Endothelial cell of umbilical vein (primary cell): ENCODE measurements at regions of chr1 and their contacts with region 1.

Region 1: DNA sequence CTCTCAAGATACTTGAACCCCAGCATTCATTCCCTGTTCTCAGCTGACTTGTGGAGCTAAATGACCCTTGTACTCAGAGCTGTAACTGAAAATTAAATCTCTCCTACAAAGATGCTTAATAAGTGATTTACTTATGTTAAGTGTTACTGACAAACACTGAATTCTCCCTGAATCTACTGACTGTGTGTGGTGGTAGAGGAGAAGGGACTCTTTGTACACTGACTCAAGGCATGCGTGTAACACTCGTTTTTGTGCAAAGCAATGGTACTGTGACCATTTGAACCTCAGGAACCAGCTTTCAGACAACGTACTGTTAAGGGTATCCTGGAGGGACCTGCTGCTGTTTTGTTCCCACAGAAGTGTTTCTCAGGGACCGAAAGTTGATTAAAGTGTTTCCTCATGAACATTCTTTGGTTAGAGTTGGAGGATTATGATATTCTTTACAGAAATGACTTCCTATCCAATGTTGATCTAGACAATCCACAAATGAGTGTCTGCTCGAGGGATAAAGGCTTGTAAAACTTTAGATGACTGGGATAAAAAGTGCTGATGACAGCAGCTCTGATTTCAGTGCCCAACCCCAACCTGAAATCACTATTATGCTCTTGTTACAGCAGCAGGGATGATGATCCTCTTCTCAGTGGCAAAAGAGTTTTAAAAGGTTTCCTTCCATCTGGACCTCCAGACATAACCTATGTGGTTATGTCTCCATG is 12.8 kb downstream of the RGL1 start:
- DNase-seq: peak; percentile 63
- H3K4me3 ChIP-seq: no peak overlapping the region
- H3K27ac ChIP-seq: no peak overlapping the region
- H3K4me1 ChIP-seq: peaks cover 38% of the 10 kb centered on the region
- H3K27me3 ChIP-seq: no peaks in the 10 kb centered on the region
- CTCF ChIP-seq: no peak
- POLR2A ChIP-seq: no peak

Region 2: DNA sequence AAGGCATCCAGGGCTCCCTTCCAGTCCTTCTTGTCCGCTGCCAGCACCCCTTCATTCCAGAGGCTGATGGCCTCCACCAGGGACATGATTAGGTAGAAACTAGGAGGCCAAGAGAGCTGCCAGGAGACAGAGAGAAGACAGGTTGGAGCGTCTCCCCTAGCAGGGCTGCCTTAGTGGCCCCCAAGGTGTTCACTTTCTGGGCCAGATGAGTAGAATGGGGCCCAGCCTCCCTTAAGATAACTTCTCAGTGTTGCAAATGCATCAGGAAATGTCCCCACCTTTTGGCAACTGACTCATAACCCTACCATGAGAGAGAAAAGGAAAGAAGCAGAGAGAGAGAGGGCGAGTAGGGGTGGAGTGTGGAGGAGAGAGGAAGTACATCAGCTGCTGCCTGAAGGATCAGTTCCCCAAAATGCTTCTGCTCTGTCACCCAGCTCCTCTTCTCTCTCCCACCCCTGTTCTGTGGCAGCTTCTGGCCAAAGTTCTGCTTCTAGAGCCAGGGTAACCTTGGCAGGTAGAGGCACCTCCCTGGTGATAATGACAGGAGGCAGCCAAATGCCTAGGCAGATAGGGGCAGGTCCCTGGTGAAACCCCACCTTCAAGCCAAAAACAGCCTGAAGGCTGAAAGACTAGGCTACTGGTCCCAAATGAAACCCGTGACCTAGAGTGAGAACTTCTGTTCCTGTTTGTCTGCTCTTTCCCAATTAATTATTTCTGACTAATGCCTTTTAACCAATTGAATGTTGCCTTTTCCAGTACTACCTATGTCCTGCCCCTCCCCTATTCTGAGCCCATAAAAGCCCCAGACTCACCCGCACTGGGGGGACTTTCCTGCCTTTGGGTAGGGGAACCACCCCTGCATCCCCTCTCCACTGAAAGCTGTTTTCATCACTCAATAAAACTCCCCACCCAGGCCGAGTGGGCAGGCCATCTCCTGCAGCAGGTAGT is 227.2 kb before region 1 on chr1 and contains the start of gene NCF2:
- CTCF ChIA-PET with region 1: no interaction called
- POLR2A ChIA-PET with region 1: no interaction called
- dilution Hi-C with region 1: no loop called
- intact Hi-C with region 1: no loop called
- DNase-seq: no peak
- H3K4me3 ChIP-seq: no peak within 1 kb of the TSS
- H3K27ac ChIP-seq: no peak within 1 kb of the TSS
- H3K4me1 ChIP-seq: no peaks in the 10 kb centered on the region
- H3K27me3 ChIP-seq: peaks cover 5 to 7% of the 10 kb centered on the region in 2 experiments
- CTCF ChIP-seq: no peak
- POLR2A ChIP-seq: no peak
- total RNA-seq, gene NCF2: not detected in 2 replicates

Region 3: GRCh38 chr1:183783767-183784637 is 33.7 kb before region 1 on chr1:
- CTCF ChIA-PET with region 1: no interaction called
- POLR2A ChIA-PET with region 1: no interaction called
- dilution Hi-C with region 1: no loop called
- intact Hi-C with region 1: no loop called
- DNase-seq: peak; percentile 90
- H3K4me3 ChIP-seq: no peak overlapping the region
- H3K27ac ChIP-seq: peak overlapping the region; percentile 8
- H3K4me1 ChIP-seq: peaks cover 21% of the 10 kb centered on the region
- H3K27me3 ChIP-seq: no peaks in the 10 kb centered on the region
- CTCF ChIP-seq: no peak
- POLR2A ChIP-seq: no peak

Region 4: DNA sequence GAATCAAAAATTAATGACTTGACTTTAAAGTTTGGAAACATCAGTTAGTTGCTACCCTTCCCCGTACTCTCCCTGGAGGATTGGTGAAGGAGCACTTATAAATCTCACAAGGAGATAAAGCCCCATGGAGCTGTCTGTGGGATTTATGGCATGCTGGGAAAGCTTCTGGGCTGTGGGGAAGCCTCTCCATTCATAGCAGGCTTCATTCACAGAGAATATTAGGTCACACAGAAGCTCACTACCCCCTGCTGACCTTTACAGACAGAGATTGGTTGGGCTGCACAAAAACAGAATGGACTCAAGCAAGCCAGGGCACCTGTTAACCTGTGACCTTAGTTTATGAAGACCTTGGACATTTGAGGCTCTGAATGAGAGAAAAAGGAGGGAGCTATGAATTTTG is 19.3 kb after region 1 on chr1:
- CTCF ChIA-PET with region 1: interaction called, 8 read pairs
- POLR2A ChIA-PET with region 1: no interaction called
- dilution Hi-C with region 1: no loop called
- intact Hi-C with region 1: loop called (anchors 1 kb)
- DNase-seq: no peak
- H3K4me3 ChIP-seq: no peak overlapping the region
- H3K27ac ChIP-seq: no peak overlapping the region
- H3K4me1 ChIP-seq: peaks cover 35% of the 10 kb centered on the region
- H3K27me3 ChIP-seq: no peaks in the 10 kb centered on the region
- CTCF ChIP-seq: no peak
- POLR2A ChIP-seq: no peak

Region 5: DNA sequence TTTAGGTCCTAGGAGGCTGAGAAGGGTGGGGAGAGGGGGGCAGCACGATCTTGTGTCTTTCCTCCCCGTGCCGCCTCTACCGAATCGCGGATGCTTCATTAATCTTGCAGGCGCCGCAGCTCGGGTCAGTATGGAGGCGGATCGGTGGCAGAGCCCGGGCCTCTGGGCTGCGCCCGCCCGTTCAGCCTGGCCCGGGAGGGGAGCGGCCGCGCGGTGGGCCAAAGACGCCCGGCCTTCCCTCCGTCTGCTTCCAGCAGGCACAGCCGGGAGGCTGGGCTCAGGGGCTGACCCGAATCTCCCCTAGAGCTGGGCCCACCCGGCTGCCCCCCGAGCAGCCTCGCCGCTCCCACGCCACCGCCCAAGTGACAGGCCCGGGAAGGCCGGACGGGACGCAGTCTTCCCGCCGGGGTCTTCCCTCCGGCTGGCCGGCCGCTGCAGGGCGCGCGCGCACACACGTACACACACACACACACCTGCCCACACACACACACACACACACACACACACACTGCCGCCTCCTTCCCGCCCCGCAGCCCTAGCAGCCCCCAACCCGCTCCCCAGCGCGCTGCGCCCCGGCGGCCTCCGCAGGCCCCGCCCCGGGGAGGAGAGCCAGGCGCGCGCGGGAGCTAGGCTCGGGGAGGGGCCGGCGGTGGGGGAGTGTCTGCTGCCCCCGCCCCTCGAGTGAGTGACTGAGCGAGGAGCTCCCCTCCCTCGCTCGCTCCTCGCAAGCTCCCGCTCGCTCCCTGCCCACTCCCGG is 568.8 kb after region 1 on chr1 and contains the start of gene C1orf21:
- CTCF ChIA-PET with region 1: no interaction called
- POLR2A ChIA-PET with region 1: no interaction called
- dilution Hi-C with region 1: no loop called
- intact Hi-C with region 1: no loop called
- DNase-seq: peak; percentile 82
- H3K4me3 ChIP-seq: peak within 1 kb of the TSS; percentile 40 to 84 (median 66)
- H3K27ac ChIP-seq: no peak within 1 kb of the TSS
- H3K4me1 ChIP-seq: peaks cover 15% of the 10 kb centered on the region
- H3K27me3 ChIP-seq: peaks cover 10 to 20% of the 10 kb centered on the region in 2 experiments
- CTCF ChIP-seq: no peak
- POLR2A ChIP-seq: no peak
- total RNA-seq, gene C1orf21: 8.5 and 10.0 TPM in 2 replicates